HEK293 (cell line): ENCODE measurements at regions of chr1 and their contacts with region 1.

Region 1: GRCh38 chr1:151340870-151341754 is 5.9 kb downstream of the RFX5 start:
- H3K4me3 ChIP-seq: no peak overlapping the region
- H3K27ac ChIP-seq: no peak overlapping the region
- H3K4me1 ChIP-seq: no peaks in the 10 kb centered on the region
- CTCF ChIP-seq: peak; percentile 65

Region 2: GRCh38 chr1:151098126-151098525 is 243.0 kb before region 1 on chr1:
- CTCF ChIA-PET with region 1: interaction called, 13 read pairs
- POLR2A ChIA-PET with region 1: no interaction called
- H3K4me3 ChIP-seq: no peak overlapping the region
- H3K27ac ChIP-seq: no peak overlapping the region
- H3K4me1 ChIP-seq: no peaks in the 10 kb centered on the region
- CTCF ChIP-seq: no peak

Region 3: DNA sequence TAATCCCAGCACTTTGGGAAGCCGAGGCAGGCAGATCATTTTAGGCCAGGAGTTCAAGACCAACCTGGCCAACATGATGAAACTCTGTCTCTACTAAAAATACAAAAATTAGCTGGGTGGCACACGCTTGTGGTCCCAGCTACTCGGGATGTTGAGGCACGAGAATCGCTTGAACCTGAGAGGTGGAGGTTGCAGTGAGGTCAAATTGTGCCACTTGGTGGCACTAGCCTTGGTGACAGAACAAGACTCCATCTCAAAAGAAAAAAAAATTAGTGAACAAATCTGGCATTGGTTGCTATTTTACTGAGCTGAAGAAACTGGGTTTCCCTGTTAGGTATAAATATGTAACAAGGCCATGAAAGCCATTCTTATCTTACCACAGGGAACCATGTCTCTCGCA is 113.5 kb before region 1 on chr1:
- CTCF ChIA-PET with region 1: interaction called, 11 read pairs
- POLR2A ChIA-PET with region 1: no interaction called
- H3K4me3 ChIP-seq: no peak overlapping the region
- H3K27ac ChIP-seq: no peak overlapping the region
- H3K4me1 ChIP-seq: no peaks in the 10 kb centered on the region
- CTCF ChIP-seq: no peak

Region 4: DNA sequence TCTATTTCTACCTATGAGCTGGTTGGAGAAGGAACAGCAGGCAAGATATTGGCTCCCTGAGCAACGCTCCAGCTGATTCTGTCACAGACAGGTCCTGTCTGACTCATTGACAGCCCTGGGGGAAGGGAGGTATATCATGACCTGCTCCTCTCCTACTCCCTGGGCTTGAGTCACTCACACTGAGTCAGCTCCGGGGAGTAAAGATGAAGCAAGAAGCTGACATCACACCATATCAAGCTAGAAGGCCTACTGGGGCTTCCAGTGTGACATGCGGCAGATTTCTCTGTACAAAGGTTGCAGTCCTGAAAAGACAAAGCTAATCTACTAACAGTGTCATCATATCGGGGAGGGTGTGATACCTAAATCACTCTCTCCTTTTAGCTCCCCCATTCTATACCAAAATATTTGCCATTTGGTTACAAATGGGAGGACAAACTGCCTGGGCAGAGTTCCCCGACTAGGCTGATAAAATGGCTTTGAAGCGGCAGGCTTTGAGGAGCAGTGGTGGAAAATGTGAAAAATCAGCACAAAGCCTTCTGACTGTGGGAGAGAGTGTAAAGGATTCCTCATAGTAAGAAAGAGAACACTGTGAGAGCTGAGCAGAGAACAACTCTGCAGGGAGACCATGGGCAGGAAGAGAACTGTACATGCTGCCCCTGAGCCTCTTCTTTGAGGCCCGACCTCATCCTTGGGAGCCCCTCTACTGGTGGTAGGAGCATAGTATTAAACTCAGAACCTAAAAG is 29.4 kb before region 1 on chr1:
- CTCF ChIA-PET with region 1: interaction called, 88 read pairs
- POLR2A ChIA-PET with region 1: interaction called, 5 read pairs
- H3K4me3 ChIP-seq: no peak overlapping the region
- H3K27ac ChIP-seq: peak overlapping the region; percentile 37
- H3K4me1 ChIP-seq: no peaks in the 10 kb centered on the region
- CTCF ChIP-seq: no peak

Region 5: DNA sequence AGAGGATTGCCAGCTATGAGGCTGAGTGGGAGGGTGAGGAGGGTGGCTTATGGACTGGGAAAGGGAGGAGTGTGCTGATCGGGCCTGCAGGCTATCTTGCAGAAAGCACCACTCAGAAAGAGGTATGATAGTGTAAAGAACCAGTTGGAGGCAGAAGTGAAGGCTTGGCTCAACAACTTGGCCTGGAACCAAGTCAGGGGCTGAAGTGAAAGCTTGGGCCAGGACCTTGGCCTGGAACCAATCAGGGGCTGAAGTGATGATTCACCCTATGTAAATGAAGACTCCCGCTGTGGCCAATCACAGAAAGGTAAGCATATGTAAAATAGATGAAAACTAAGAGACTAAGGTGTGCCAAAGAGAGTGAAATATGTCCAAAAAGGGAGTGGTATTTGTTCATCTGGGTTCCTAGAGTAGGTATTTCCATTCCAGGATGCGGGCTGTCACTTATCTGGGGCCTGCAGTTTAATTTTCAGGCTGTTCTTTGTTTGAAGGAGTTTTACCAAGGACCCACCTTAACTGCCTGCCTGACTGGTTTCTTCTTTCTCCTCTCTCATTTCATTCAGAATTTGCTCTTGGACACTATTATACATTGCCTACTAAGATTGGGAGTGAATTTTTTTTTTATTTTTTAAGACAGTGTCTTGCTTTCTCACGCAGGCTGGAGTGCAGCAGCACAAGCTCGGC is 11.0 kb after region 1 on chr1:
- CTCF ChIA-PET with region 1: interaction called, 22 read pairs
- POLR2A ChIA-PET with region 1: interaction called, 3 read pairs
- H3K4me3 ChIP-seq: no peak overlapping the region
- H3K27ac ChIP-seq: no peak overlapping the region
- H3K4me1 ChIP-seq: no peaks in the 10 kb centered on the region
- CTCF ChIP-seq: no peak

Region 6: DNA sequence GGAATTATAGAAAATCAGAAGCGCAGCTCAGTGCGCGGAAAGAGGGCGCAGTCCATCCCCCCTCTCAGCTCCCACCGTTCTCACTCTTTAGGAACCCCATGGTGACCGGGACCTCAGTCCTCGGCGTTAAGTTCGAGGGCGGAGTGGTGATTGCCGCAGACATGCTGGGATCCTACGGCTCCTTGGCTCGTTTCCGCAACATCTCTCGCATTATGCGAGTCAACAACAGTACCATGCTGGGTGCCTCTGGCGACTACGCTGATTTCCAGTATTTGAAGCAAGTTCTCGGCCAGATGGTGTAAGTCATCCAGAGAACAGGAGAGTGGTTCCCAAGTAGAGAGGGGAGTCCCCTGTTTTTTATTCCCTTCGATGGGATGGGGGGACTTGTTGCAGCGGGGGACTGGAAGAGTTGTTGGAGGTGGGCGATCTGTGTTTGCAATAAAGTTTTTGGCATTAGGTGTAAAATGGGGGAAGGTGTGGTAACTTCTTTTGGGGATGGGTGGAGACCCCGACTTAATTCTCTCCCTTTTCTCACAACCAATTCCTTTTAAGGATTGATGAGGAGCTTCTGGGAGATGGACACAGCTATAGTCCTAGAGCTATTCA is 58.9 kb after region 1 on chr1:
- CTCF ChIA-PET with region 1: interaction called, 12 read pairs
- POLR2A ChIA-PET with region 1: interaction called, 3 read pairs
- H3K4me3 ChIP-seq: peak overlapping the region; percentile 91
- H3K27ac ChIP-seq: peak overlapping the region; percentile 71
- H3K4me1 ChIP-seq: no peaks in the 10 kb centered on the region
- CTCF ChIP-seq: no peak